Activated CD4-positive, alpha-beta memory T cell treated with anti-CD3 and anti-CD28 coated beads for 36 hours (primary cell): ENCODE measurements at regions of chr7 and their contacts with region 1.

Region 1: GRCh38 chr7:104943502-104944343 is 70.3 kb upstream of the KMT2E start:
- DNase-seq: peak; percentile 89
- H3K4me3 Mint-ChIP-seq: peak overlapping the region; percentile 89
- H3K27ac Mint-ChIP-seq: peak overlapping the region; percentile 98
- H3K4me1 Mint-ChIP-seq: peaks cover 62% of the 10 kb centered on the region
- H3K27me3 Mint-ChIP-seq: no peaks in the 10 kb centered on the region

Region 2: GRCh38 chr7:104482362-104483037 is 461.2 kb before region 1 on chr7:
- CTCF ChIA-PET with region 1: no interaction called
- POLR2A ChIA-PET with region 1: no interaction called
- intact Hi-C with region 1: no loop called
- DNase-seq: no peak
- H3K4me3 Mint-ChIP-seq: no peak overlapping the region
- H3K27ac Mint-ChIP-seq: no peak overlapping the region
- H3K4me1 Mint-ChIP-seq: no peaks in the 10 kb centered on the region
- H3K27me3 Mint-ChIP-seq: peaks cover 4% of the 10 kb centered on the region

Region 3: DNA sequence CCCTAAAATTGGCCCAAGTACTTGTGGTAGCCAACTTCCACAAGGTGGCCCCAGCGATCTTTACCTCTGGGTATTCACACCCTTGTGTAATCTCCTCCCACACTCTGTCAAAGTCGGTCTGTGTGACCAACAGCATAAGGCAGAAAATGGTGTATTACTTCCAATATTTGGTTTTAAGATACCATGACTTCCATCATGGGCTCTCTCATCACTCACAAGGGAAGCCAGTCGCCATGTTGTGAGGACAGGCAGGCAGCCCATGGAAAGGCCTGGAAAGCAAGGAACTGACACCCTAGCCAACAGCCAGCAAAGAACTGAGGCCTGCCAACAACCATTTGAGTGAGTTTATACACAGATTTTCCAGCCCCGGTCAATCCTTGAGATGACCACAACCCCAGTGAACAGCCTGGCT is 20.7 kb before region 1 on chr7:
- CTCF ChIA-PET with region 1: interaction called, 3 read pairs
- POLR2A ChIA-PET with region 1: interaction called, 4 read pairs
- intact Hi-C with region 1: loop called (anchors 1 kb)
- DNase-seq: peak; percentile 87
- H3K4me3 Mint-ChIP-seq: no peak overlapping the region
- H3K27ac Mint-ChIP-seq: peak overlapping the region; percentile 18
- H3K4me1 Mint-ChIP-seq: peaks cover 4% of the 10 kb centered on the region
- H3K27me3 Mint-ChIP-seq: no peaks in the 10 kb centered on the region

Region 4: GRCh38 chr7:105013221-105013815 is 69.6 kb after region 1 on chr7:
- CTCF ChIA-PET with region 1: interaction called, 3 read pairs
- POLR2A ChIA-PET with region 1: interaction called, 251 read pairs
- intact Hi-C with region 1: loop called (anchors 1 kb)
- DNase-seq: peak; percentile 96
- H3K4me3 Mint-ChIP-seq: peak overlapping the region; percentile 99
- H3K27ac Mint-ChIP-seq: peak overlapping the region; percentile 100
- H3K4me1 Mint-ChIP-seq: peaks cover 20% of the 10 kb centered on the region
- H3K27me3 Mint-ChIP-seq: no peaks in the 10 kb centered on the region

Region 5: GRCh38 chr7:105209870-105210269 is 266.1 kb after region 1 on chr7:
- CTCF ChIA-PET with region 1: no interaction called
- POLR2A ChIA-PET with region 1: no interaction called
- intact Hi-C with region 1: loop called (anchors 5 kb)
- DNase-seq: no peak
- H3K4me3 Mint-ChIP-seq: no peak overlapping the region
- H3K27ac Mint-ChIP-seq: no peak overlapping the region
- H3K4me1 Mint-ChIP-seq: peaks cover 73% of the 10 kb centered on the region
- H3K27me3 Mint-ChIP-seq: no peaks in the 10 kb centered on the region

Region 6: GRCh38 chr7:105429746-105430612 is 486.3 kb after region 1 on chr7:
- CTCF ChIA-PET with region 1: interaction called, 3 read pairs
- POLR2A ChIA-PET with region 1: no interaction called
- intact Hi-C with region 1: loop called (anchors 5 kb)
- DNase-seq: peak; percentile 57
- H3K4me3 Mint-ChIP-seq: no peak overlapping the region
- H3K27ac Mint-ChIP-seq: no peak overlapping the region
- H3K4me1 Mint-ChIP-seq: peaks cover 19% of the 10 kb centered on the region
- H3K27me3 Mint-ChIP-seq: no peaks in the 10 kb centered on the region